Vagina (tissue), 2 donors: ENCODE measurements at regions of chr2 and their contacts with region 1.

Region 1: DNA sequence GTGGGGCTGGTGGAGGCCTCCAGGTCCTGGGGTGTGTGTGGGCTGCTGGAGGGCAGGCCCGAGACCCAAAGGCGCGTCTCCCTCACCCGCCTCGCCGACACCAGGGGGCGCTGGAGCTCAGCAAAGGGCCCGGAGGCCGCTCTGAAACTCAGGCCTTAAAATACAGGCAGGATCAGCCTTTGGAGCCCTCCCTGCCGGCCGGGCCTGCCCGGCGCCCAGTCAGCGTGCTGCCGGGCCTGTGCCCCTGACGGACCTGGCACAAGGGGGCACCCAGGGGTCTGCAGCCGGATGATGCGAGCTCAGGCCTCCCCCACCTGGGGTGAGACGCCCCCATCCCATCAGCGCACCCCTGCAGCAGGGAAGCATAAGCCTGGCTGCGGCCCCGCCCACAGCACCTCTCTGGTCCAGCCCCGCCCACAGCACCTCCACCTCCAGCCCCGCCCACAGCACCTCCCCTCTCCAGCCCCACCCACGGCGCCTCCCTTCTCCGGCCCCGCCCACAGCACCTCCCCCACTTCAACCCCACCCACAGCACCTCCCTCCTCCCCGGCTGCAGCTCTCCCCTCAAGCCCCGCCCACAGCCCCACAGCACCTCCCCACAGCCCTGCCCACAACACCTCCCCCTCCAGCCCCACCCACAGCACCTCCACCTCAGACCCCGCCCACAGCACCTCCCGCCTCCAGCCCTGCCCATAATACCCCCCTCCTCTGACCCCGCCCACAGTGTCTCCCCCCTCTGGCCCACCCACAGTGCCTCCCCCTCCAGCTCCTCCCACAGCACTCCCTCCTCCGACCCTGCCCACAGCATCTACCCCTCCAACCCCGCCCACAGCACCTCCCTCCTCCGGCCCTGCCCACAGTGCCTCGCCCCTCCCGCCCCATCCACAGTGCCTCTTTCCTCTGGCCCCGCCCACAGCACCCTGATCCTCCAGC is 92.8 kb upstream of the OTOS start:
- DNase-seq: no peak
- H3K4me3 ChIP-seq: peak overlapping the region; percentile 24 to 39
- H3K27ac ChIP-seq: peak overlapping the region; percentile 71
- H3K4me1 ChIP-seq: peaks cover 54% of the 10 kb centered on the region
- H3K27me3 ChIP-seq: no peaks in the 10 kb centered on the region
- CTCF ChIP-seq: peak; percentile 84 to 94 (median 93)
- POLR2A ChIP-seq: no peak

Region 2: GRCh38 chr2:240121675-240122074 is 111.6 kb before region 1 on chr2:
- intact Hi-C with region 1: no loop called
- DNase-seq: no peak
- H3K4me3 ChIP-seq: no peak overlapping the region
- H3K27ac ChIP-seq: no peak overlapping the region
- H3K4me1 ChIP-seq: no peaks in the 10 kb centered on the region
- H3K27me3 ChIP-seq: no peaks in the 10 kb centered on the region
- CTCF ChIP-seq: no peak
- POLR2A ChIP-seq: no peak

Region 3: DNA sequence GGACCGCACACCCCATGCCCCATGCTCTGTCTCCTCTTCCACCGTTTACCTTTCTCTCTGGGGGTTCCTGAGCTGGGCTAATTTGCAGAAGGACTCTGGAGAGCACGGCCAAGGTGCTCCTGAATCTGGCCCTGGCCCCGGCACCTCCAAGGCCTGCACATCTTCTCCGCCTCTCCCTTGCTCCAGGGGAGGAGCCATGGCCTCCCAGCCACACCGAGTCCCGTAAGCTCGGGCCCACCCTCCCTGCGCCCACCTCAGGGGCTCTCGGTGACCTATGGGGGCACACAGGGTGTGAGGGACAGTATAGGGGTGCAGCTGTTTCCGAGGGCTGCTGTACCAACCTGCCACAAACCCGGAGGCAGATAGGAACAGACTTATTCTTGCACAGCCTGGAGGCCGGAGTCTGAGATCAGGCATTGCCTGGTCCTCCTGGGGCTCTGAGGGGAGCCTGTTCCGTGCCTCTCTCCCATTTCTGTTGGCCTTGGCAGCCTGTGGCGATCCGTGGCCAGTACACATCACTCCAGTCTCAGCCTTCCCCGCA is 75.0 kb after region 1 on chr2:
- intact Hi-C with region 1: no loop called
- DNase-seq: no peak
- H3K4me3 ChIP-seq: no peak overlapping the region
- H3K27ac ChIP-seq: no peak overlapping the region
- H3K4me1 ChIP-seq: no peaks in the 10 kb centered on the region
- H3K27me3 ChIP-seq: no peaks in the 10 kb centered on the region
- CTCF ChIP-seq: no peak
- POLR2A ChIP-seq: no peak

Region 4: DNA sequence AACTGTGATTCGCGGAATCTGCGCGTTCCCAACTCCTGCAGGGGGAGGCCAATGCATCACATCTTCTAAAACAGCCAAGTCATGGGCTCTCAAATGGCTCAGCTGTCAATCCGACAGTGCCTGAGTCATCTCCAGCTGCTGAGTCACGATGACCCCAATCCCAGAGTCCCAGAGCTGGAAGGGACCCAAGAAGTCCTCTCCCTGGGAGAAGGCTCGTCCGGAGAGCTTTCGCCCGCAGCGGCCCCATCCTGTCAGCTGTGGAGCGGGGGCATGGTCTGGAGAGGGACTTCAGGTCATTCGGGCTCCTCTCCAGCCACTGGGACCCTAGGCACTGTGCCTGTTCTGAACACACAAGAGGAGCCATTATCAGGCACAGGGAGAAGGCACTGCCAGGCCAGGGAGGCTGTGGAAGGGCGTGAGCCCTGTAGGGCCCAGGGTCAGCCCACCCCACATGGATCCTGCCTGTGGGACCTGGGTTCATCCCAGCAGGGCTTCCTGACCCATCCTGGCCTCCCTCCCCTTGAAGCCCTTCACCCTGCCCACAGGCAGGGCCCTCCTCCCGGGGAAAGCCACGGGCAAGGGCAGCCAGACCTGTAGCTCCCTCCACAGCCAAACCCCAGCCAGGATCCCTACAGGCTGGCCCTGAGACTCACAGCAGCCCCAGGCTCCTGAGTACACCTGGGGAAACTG is 154.6 kb after region 1 on chr2:
- intact Hi-C with region 1: loop called (anchors 10 kb)
- DNase-seq: no peak
- H3K4me3 ChIP-seq: no peak overlapping the region
- H3K27ac ChIP-seq: peak overlapping the region; percentile 68
- H3K4me1 ChIP-seq: peaks cover 15% of the 10 kb centered on the region
- H3K27me3 ChIP-seq: no peaks in the 10 kb centered on the region
- CTCF ChIP-seq: peak in 1 of 3 experiments; percentile 9
- POLR2A ChIP-seq: no peak

Region 5: GRCh38 chr2:240434728-240435456 is 201.7 kb after region 1 on chr2:
- intact Hi-C with region 1: loop called (anchors 2 kb)
- DNase-seq: no peak
- H3K4me3 ChIP-seq: peak overlapping the region; percentile 66 to 78
- H3K27ac ChIP-seq: peak overlapping the region; percentile 90
- H3K4me1 ChIP-seq: peaks cover 61% of the 10 kb centered on the region
- H3K27me3 ChIP-seq: no peaks in the 10 kb centered on the region
- CTCF ChIP-seq: no peak
- POLR2A ChIP-seq: peak in 1 of 2 donors; percentile 34